SK-N-SH (cell line): ENCODE measurements at regions of chr12 and their contacts with region 1.

Region 1: GRCh38 chr12:98653866-98654493 is 8.9 kb downstream of the APAF1 start:
- DNase-seq: peak; percentile 61
- H3K4me3 ChIP-seq: peak overlapping the region in 1 of 2 experiments; percentile 17; a peak in 1 of 4 replicates
- H3K27ac ChIP-seq: no peak overlapping the region
- H3K4me1 ChIP-seq: no peaks in the 10 kb centered on the region
- H3K27me3 ChIP-seq: no peaks in the 10 kb centered on the region
- CTCF ChIP-seq: peak; percentile 78
- EP300 ChIP-seq: no peak
- RAD21 ChIP-seq: peak; percentile 92

Region 2: GRCh38 chr12:98424726-98425401 is 229.1 kb before region 1 on chr12:
- CTCF ChIA-PET with region 1: interaction called, 10 read pairs
- POLR2A ChIA-PET with region 1: no interaction called
- DNase-seq: peak; percentile 70
- H3K4me3 ChIP-seq: no peak overlapping the region
- H3K27ac ChIP-seq: peak overlapping the region in 1 of 2 experiments; percentile 1; a peak in 1 of 4 replicates
- H3K4me1 ChIP-seq: peaks cover 0 to 19% of the 10 kb centered on the region in 2 experiments; a peak in 2 of 4 replicates
- H3K27me3 ChIP-seq: no peaks in the 10 kb centered on the region
- CTCF ChIP-seq: peak; percentile 80
- EP300 ChIP-seq: no peak
- RAD21 ChIP-seq: peak; percentile 63

Region 3: GRCh38 chr12:98490501-98491453 is 163.2 kb before region 1 on chr12:
- CTCF ChIA-PET with region 1: interaction called, 10 read pairs
- POLR2A ChIA-PET with region 1: no interaction called
- DNase-seq: peak; percentile 76
- H3K4me3 ChIP-seq: peak overlapping the region in 1 of 2 experiments; percentile 18; a peak in 1 of 4 replicates
- H3K27ac ChIP-seq: peak overlapping the region; percentile 69 to 80
- H3K4me1 ChIP-seq: peaks cover 5% of the 10 kb centered on the region in 2 experiments; a peak in 2 of 4 replicates
- H3K27me3 ChIP-seq: no peaks in the 10 kb centered on the region
- CTCF ChIP-seq: peak; percentile 90
- EP300 ChIP-seq: peak in 1 of 2 experiments; percentile 17; a peak in 1 of 4 replicates
- RAD21 ChIP-seq: peak; percentile 75

Region 4: DNA sequence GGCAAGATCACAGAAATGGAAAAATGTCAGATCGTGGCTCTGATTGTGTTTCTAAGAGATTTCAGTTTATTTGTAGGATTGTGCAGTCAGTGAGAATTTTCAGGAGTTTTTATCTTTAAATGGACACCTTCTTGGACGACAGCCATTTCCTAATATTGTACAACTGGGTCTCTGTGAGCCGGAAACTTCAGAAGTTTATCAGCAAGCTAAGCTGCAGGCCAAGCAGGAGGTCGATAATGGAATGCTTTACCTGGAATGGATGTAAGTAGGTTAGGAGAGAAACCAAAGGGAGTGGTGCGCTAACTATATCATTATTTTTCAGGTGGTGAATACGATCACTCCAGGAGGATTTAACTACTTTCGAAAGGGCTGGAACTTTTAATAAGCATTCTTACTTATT is 17.5 kb after region 1 on chr12:
- CTCF ChIA-PET with region 1: interaction called, 13 read pairs
- POLR2A ChIA-PET with region 1: no interaction called
- DNase-seq: no peak
- H3K4me3 ChIP-seq: no peak overlapping the region
- H3K27ac ChIP-seq: no peak overlapping the region
- H3K4me1 ChIP-seq: no peaks in the 10 kb centered on the region; a peak in 1 of 4 replicates
- H3K27me3 ChIP-seq: no peaks in the 10 kb centered on the region
- CTCF ChIP-seq: no peak
- EP300 ChIP-seq: no peak
- RAD21 ChIP-seq: no peak

Region 5: DNA sequence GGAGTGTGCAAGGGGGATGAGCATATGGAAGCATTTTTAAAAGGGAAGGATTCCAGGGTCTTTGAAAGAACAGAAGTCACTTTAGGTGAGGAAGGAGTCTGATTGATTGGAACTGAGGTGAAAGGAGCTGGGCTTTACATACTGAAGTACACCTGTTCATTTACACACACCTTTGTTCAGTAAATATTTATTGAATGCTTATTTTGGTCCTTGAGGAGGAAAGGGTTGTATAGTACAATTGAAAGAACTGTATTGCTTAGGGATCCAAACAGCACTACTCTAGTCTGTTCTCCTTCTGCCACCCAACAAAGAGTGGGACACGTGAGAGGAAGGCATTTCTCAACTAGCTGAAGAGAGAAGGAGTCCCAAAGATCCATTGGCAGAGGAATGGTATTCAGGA is 55.0 kb after region 1 on chr12:
- CTCF ChIA-PET with region 1: no interaction called
- POLR2A ChIA-PET with region 1: no interaction called
- DNase-seq: no peak
- H3K4me3 ChIP-seq: no peak overlapping the region
- H3K27ac ChIP-seq: no peak overlapping the region
- H3K4me1 ChIP-seq: no peaks in the 10 kb centered on the region
- H3K27me3 ChIP-seq: no peaks in the 10 kb centered on the region
- CTCF ChIP-seq: no peak
- EP300 ChIP-seq: no peak
- RAD21 ChIP-seq: no peak